Ascending aorta (tissue), 2 donors: ENCODE measurements at regions of chr3 and their contacts with region 1.

Region 1: DNA sequence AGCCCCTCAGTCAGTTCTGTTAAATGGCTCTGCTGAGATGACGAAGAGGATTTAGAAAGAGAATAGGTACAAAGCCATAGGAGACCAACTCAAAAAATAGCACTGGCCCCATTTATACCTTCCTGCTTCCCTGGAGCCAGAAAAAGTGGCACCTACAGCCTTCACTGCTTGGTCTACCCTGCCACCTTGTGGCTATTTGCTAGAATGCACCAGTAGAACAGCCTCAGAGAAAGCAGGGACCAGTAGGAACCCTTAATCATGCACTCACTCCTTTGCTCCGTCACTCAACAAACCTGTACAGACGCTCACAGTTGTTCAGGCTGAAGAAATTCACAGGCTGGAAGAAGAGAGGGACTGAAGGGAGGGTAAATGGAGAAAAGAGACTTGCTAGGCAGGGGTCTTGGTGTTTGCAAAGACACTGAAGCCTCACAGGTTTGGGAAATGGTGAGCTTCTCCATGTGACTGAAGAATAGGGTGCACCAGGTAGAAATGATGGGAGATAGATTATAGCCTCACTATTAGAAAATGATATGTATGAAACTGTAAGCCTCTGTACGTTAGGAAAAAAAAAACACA is 12.1 kb upstream of the RTP2 start:
- DNase-seq: peak in 1 of 2 donors; percentile 88
- H3K4me3 ChIP-seq: no peak overlapping the region
- H3K27ac ChIP-seq: no peak overlapping the region
- H3K4me1 ChIP-seq: no peaks in the 10 kb centered on the region
- H3K27me3 ChIP-seq: no peaks in the 10 kb centered on the region
- CTCF ChIP-seq: peak; percentile 89 to 94 (median 94)

Region 2: DNA sequence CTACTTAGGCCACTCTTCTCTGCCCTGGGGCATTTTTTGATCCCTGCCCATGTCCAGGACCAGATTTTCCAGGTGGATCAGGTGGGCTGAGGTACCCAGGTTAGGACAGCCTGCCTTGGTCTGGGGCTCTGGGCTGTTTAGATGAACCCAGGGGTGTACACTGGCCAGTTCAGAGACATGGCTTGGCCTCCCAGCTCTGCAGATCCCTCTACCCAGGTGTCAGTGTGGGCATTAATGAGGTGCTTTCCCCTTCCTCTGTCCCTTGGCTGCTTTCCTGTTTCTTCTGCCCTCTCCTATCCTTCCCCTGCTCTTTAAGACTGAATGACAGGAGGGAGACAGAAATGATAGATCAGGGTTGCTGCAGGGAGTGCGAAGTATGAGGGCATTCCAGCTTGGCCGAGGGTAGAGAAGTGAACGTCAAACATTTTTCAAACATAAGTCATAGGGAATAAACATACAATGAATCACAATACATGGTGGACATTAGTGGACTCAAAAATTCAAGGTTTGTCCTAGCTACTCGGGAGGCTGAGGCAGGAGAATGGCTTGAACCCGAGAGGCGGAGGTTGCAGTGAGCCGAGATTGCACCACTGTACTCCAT is 486.7 kb before region 1 on chr3:
- intact Hi-C with region 1: loop called (anchors 10 kb)
- DNase-seq: no peak
- H3K4me3 ChIP-seq: no peak overlapping the region
- H3K27ac ChIP-seq: no peak overlapping the region
- H3K4me1 ChIP-seq: peaks cover 0 to 11% of the 10 kb centered on the region in 2 donors
- H3K27me3 ChIP-seq: no peaks in the 10 kb centered on the region
- CTCF ChIP-seq: no peak